Gastrocnemius medialis (tissue), 4 donors: ENCODE measurements at regions of chr1 and their contacts with region 1.

Region 1: GRCh38 chr1:85344256-85344694 is 67.8 kb upstream of the BCL10 start:
- DNase-seq: peak in 1 of 2 donors; percentile 27
- ATAC-seq: no peak
- H3K4me3 ChIP-seq: no peak overlapping the region
- H3K27ac ChIP-seq: peak overlapping the region in 2 of 4 donors; percentile 42 to 82
- H3K4me1 ChIP-seq: peaks cover 37 to 42% of the 10 kb centered on the region in 2 donors
- H3K27me3 ChIP-seq: no peaks in the 10 kb centered on the region
- CTCF ChIP-seq: peak; percentile 39 to 75 (median 51)
- POLR2A ChIP-seq: no peak

Region 2: DNA sequence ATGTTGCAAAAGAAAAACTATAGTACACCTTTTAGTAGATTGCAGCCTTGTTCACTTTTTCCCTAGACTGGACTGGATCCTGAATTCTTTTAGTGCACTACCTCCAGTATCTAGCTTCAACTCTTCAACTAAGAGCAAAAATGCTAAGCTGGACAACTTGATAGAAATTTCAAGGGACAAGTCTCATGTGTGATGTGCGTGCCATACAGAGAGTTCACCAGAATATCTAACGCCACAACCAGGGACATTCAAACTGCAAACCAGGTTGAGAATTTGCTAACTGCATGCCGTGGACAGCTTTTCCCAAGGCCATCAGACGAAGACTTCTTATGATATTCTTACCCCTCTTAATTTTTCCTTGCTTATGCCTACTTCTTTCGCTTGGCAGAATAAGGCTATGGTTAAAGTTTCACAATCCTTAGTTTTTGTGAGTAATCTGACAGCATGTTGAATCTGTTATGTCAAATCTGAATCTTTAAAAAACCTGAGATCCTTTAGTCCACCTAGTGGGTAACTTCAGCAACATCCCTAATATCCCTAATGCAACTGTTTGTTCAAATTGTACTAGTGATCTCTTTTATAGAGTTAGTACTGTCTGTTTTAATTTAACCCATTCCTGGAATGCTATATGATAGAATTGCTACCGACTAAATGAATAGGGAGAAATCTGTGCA is 54.3 kb after region 1 on chr1:
- in situ Hi-C with region 1: no loop called
- intact Hi-C with region 1: loop called (anchors 5 kb)
- DNase-seq: no peak
- ATAC-seq: peak; percentile 75 to 76
- H3K4me3 ChIP-seq: no peak overlapping the region
- H3K27ac ChIP-seq: peak overlapping the region in 1 of 4 donors; percentile 11
- H3K4me1 ChIP-seq: peaks cover 3 to 10% of the 10 kb centered on the region in 2 donors
- H3K27me3 ChIP-seq: no peaks in the 10 kb centered on the region
- CTCF ChIP-seq: peak; percentile 19 to 60 (median 42)
- POLR2A ChIP-seq: no peak